K562 (cell line): ENCODE measurements at regions of chr1 and their contacts with region 1.

Region 1: GRCh38 chr1:155574077-155574476 is 11.5 kb upstream of the ASH1L start:
- DNase-seq: no peak
- ATAC-seq: peak; percentile 44
- H3K4me3 ChIP-seq: no peak overlapping the region
- H3K27ac ChIP-seq: no peak overlapping the region
- H3K4me1 ChIP-seq: peaks cover 0 to 12% of the 10 kb centered on the region in 2 experiments; a peak in 2 of 5 replicates
- H3K27me3 ChIP-seq: no peaks in the 10 kb centered on the region
- CTCF ChIP-seq: no peak
- EP300 ChIP-seq: no peak
- POLR2A ChIP-seq: no peak
- RAD21 ChIP-seq: no peak

Region 2: DNA sequence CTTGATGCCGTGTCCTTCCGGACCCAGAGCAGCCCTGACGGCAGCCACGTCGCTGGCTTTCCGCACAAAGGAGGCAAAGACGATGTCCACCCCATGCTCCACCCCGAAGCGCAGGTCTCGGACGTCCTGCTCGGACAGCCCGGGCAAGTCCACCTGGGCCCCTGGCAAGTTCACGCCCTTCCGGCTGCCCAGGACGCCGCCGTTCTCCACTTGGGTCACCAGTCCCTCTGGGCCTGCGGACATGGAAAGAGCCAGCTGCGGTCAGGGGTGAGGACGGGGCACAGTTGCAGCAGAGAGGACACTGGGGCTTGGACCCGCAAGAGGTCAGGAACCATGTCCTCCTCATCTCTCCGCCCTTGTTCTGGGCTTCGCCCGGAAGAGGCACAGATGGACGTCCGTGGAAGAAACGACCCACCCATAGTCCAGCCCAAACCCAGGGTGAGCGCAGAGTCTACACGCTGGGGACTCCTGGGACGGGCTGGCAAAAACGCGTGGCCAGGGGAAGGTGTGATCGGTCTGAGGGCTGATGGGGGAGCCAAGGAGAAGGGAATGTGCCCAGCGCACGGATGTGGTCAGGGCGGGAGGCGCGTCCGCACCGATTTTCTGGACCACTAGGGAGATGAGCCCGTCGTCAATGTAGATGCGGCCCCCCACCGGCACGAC is 279.4 kb before region 1 on chr1:
- CTCF ChIA-PET with region 1: no interaction called
- POLR2A ChIA-PET with region 1: no interaction called
- in situ Hi-C with region 1: no loop called
- intact Hi-C with region 1: no loop called
- DNase-seq: no peak
- ATAC-seq: no peak
- H3K4me3 ChIP-seq: no peak overlapping the region
- H3K27ac ChIP-seq: no peak overlapping the region
- H3K4me1 ChIP-seq: peaks cover 5 to 33% of the 10 kb centered on the region in 2 experiments; a peak in 4 of 5 replicates
- H3K27me3 ChIP-seq: no peaks in the 10 kb centered on the region
- CTCF ChIP-seq: no peak
- EP300 ChIP-seq: no peak
- POLR2A ChIP-seq: no peak
- RAD21 ChIP-seq: no peak

Region 3: GRCh38 chr1:155562581-155563376 is 11.3 kb before region 1 on chr1 and contains the start of gene ASH1L:
- CTCF ChIA-PET with region 1: no interaction called
- POLR2A ChIA-PET with region 1: interaction called, 15 read pairs
- in situ Hi-C with region 1: no loop called
- intact Hi-C with region 1: no loop called
- DNase-seq: peak; percentile 93 to 99 (median 94)
- ATAC-seq: peak; percentile 90
- H3K4me3 ChIP-seq: peak within 1 kb of the TSS; percentile 98
- H3K27ac ChIP-seq: peak within 1 kb of the TSS; percentile 100
- H3K4me1 ChIP-seq: peaks cover 2 to 11% of the 10 kb centered on the region in 2 experiments; a peak in 4 of 5 replicates
- H3K27me3 ChIP-seq: no peaks in the 10 kb centered on the region
- CTCF ChIP-seq: no peak
- EP300 ChIP-seq: no peak; the same call in 1 of the 2 replicates
- POLR2A ChIP-seq: peak; percentile 100
- RAD21 ChIP-seq: no peak
- polyA plus RNA-seq, gene ASH1L: 2.0 to 6.0 TPM

Region 4: GRCh38 chr1:155893389-155894142 is 319.5 kb after region 1 on chr1:
- CTCF ChIA-PET with region 1: no interaction called
- POLR2A ChIA-PET with region 1: no interaction called
- in situ Hi-C with region 1: no loop called
- intact Hi-C with region 1: no loop called
- DNase-seq: peak in 1 of 4 experiments; percentile 4
- ATAC-seq: peak; percentile 65; the same call in 2 of the 3 replicates
- H3K4me3 ChIP-seq: no peak overlapping the region
- H3K27ac ChIP-seq: no peak overlapping the region
- H3K4me1 ChIP-seq: peaks cover 0 to 4% of the 10 kb centered on the region in 2 experiments; a peak in 3 of 5 replicates
- H3K27me3 ChIP-seq: no peaks in the 10 kb centered on the region
- CTCF ChIP-seq: no peak
- EP300 ChIP-seq: no peak
- POLR2A ChIP-seq: no peak
- RAD21 ChIP-seq: no peak